H1 (cell line): ENCODE measurements at regions of chr11 and their contacts with region 1.

Region 1: DNA sequence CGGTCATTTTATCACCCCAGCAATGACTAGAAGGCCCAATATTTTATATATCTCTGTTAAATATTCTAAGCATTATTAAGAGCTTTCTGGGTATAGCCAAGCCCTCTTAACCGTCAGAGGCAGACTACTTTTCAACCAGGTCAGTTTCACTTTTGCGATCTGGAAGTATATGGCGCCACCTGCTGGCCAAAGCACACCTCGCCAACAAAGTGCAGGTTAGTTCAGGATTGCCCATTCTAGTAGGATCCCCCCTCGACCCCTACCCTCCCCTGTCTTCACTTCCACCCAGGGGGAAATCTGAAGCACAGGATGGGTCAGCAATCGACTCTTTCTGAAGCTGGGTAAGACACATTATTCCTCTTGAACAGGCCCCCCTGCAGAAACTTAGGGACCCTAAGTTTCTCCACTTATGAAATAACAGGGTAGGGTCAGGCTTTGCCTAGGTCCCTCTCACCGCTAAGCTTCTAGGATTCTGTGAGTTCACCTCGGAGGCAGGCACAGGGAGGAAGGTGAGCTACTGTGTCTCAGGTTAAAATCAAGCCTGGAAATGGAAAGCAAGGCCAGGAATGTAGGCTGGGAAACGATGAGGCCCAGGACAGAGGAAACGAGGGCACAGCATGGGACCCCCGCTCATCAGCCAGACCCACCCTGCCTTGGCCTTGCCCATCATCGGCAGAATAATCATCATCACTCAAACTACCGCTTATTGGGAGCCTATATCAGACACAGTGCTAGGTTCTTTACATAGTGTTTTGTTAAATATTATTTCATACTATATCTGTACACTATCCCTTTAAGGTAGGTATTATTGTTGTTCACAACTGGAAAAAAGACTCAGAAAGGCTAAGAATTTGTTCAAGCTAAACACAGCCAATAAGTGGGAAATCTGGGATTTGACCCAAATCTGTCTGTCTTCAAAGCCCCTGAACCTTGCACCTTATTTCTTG is 35.6 kb downstream of the KCNJ1 start:
- DNase-seq: peak; percentile 66 to 91
- H3K4me3 ChIP-seq: no peak overlapping the region
- H3K27ac ChIP-seq: no peak overlapping the region
- H3K4me1 ChIP-seq: no peaks in the 10 kb centered on the region
- H3K27me3 ChIP-seq: peaks cover 0 to 3% (median 0%) of the 10 kb centered on the region in 4 experiments; a peak in 3 of 7 replicates
- CTCF ChIP-seq: peak; percentile 86 to 92 (median 88)
- EP300 ChIP-seq: no peak
- POLR2A ChIP-seq: no peak
- RAD21 ChIP-seq: peak; percentile 94 to 97

Region 2: GRCh38 chr11:128172046-128172878 is 659.2 kb before region 1 on chr11:
- CTCF ChIA-PET with region 1: interaction called, 19 read pairs
- POLR2A ChIA-PET with region 1: no interaction called
- DNase-seq: peak in 1 of 2 experiments; percentile 85
- H3K4me3 ChIP-seq: no peak overlapping the region
- H3K27ac ChIP-seq: no peak overlapping the region
- H3K4me1 ChIP-seq: peaks cover 2 to 6% (median 3%) of the 10 kb centered on the region in 4 experiments; a peak in 6 of 7 replicates
- H3K27me3 ChIP-seq: no peaks in the 10 kb centered on the region; a peak in 1 of 7 replicates
- CTCF ChIP-seq: peak; percentile 53 to 82 (median 70)
- EP300 ChIP-seq: no peak
- POLR2A ChIP-seq: no peak
- RAD21 ChIP-seq: peak; percentile 90 to 93

Region 3: GRCh38 chr11:128757235-128757711 is 74.2 kb before region 1 on chr11:
- CTCF ChIA-PET with region 1: interaction called, 30 read pairs
- POLR2A ChIA-PET with region 1: no interaction called
- DNase-seq: no peak
- H3K4me3 ChIP-seq: no peak overlapping the region
- H3K27ac ChIP-seq: no peak overlapping the region
- H3K4me1 ChIP-seq: peaks cover 0 to 3% (median 0%) of the 10 kb centered on the region in 4 experiments; a peak in 1 of 7 replicates
- H3K27me3 ChIP-seq: no peaks in the 10 kb centered on the region; a peak in 1 of 7 replicates
- CTCF ChIP-seq: peak; percentile 41 to 79 (median 64)
- EP300 ChIP-seq: no peak
- POLR2A ChIP-seq: no peak
- RAD21 ChIP-seq: peak; percentile 75 to 81

Region 4: DNA sequence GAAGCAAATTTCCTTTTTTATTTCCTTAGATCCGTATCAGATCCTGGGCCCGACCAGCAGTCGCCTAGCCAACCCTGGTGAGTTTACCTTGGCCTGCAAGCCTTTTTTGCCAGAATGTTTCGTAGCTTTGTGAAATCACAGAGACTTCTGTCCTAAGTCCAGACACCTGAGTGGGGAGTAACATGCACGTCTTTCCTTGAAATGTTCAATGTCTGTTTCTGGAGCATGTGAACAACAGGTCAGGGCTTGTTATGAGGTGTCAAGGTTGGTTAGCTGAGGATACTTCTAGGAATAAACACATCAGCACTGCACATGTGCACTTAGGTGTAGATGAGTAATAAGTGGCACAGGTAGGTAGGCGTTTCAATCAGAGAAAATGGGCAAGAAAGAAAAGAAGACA is 22.3 kb before region 1 on chr11:
- CTCF ChIA-PET with region 1: interaction called, 14 read pairs
- POLR2A ChIA-PET with region 1: no interaction called
- DNase-seq: no peak
- H3K4me3 ChIP-seq: no peak overlapping the region
- H3K27ac ChIP-seq: no peak overlapping the region
- H3K4me1 ChIP-seq: no peaks in the 10 kb centered on the region
- H3K27me3 ChIP-seq: no peaks in the 10 kb centered on the region
- CTCF ChIP-seq: no peak
- EP300 ChIP-seq: no peak
- POLR2A ChIP-seq: no peak
- RAD21 ChIP-seq: no peak

Region 5: GRCh38 chr11:128848815-128849455 is 17.5 kb after region 1 on chr11:
- CTCF ChIA-PET with region 1: interaction called, 54 read pairs
- POLR2A ChIA-PET with region 1: no interaction called
- DNase-seq: peak in 1 of 2 experiments; percentile 97
- H3K4me3 ChIP-seq: no peak overlapping the region
- H3K27ac ChIP-seq: no peak overlapping the region
- H3K4me1 ChIP-seq: no peaks in the 10 kb centered on the region
- H3K27me3 ChIP-seq: no peaks in the 10 kb centered on the region
- CTCF ChIP-seq: peak; percentile 94 to 98 (median 96)
- EP300 ChIP-seq: no peak
- POLR2A ChIP-seq: no peak
- RAD21 ChIP-seq: peak; percentile 72 to 85

Region 6: DNA sequence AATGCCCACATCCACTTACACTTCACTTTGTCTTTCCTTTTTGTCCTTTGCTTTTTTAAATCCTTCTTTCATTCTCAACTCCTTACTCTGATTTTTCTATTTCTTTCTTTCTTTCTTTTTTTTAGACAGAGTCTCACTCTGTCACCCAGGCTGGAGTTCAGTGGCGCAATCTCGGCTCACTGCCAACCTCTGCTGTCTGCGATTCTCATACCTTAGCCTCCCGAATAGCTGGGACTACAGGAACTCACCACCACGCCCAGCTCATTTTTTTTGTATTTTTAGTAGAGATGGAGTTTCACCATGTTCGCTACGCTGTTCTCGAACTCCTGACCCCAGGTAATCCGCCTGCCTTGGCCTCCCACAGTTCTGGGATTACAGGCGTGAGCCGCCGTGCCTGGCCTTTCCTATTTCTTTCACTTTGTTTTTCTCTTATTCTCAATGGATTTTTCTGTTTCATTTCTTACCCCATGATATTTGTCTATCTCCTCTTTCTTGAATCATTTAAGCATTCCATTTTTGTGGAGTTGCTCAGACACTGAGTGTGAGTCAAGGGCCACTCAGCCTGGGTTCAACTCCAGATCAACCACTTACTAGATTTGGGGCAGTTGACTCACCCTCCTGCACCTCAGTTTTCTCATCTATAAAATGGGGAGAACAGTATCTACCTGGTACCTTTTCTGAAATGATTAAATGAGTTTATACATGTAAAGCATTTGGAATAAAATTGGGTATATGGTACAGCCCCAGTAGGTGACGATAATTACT is 67.3 kb after region 1 on chr11:
- CTCF ChIA-PET with region 1: no interaction called
- POLR2A ChIA-PET with region 1: no interaction called
- DNase-seq: no peak
- H3K4me3 ChIP-seq: no peak overlapping the region
- H3K27ac ChIP-seq: no peak overlapping the region
- H3K4me1 ChIP-seq: peaks cover 2 to 21% (median 16%) of the 10 kb centered on the region in 4 experiments
- H3K27me3 ChIP-seq: peaks cover 39 to 71% (median 64%) of the 10 kb centered on the region in 4 experiments
- CTCF ChIP-seq: no peak
- EP300 ChIP-seq: no peak
- POLR2A ChIP-seq: no peak
- RAD21 ChIP-seq: no peak